ENCODE measurements at regions of chr12 and their contacts with region 1.

Region 1: DNA sequence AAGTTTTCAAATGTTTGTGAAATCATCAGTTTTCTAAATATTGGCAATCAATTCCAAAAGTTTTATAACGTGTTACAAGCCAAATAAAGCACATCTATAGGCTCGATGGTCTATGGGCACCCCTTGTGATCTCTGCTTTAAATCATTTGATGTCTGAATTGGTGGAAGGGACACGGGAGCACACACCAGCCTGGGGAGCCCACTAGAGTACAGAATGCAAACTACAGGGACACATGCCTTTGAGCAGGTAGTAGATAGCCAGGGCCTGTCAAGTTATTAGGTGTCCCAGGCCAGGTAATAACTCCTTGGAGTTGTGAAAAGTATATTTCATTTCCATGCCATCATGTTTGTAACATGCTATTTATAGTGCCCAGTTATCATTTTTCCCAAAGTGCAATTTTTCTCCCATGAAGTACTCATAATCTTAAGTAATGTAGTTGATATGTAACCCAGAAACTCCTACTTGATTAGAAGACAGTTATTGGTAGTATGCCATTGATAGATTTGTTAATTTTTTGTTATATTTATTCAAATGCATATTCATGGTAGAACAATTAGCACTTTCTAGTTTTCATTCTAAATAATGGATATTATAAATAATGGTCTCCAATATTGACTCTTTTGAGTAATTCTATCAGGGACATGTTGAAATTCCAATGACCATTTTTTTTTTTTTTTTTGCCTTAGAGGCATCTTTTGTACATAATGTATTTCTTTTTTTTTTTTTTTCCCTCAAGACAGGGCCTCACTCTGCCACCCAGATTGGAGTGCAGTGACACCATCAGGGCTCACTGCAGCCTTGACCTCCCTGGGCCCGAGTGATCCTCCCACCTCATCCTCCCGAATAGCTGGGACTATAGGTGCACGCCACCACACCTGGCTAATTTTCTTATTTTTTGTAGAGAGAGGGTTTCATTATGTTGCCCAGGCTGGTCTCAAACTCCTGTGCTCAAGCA is 96.9 kb upstream of the FGD4 start:
- DNase-seq: no peak
- ATAC-seq: no peak

Region 2: DNA sequence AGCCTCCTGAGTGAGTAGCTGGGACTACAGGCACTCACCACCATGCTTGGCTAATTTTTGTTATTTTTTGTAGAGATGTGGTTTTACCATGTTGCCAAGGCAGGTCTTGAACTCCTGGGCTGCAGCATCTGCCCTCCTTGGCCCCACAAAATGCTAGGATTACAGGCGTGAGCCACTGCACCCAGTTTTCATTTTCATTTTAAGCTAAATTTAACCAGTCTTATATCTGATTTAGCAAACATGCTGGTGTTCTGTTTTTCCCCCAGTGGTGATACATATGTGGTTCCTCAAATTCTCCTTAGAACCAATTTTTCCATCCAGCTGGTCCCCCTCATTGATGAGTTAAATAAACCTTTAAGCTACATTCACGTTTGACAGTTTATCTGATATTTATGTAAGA is 239.6 kb before region 1 on chr12:
- intact Hi-C with region 1: loop called (anchors 5 kb)
- DNase-seq: no peak
- ATAC-seq: no peak

Measured in sciatic nerve (tissue), 2 donors.